AG04449 (cell line): ENCODE measurements at regions of chr3 and their contacts with region 1.

Region 1: DNA sequence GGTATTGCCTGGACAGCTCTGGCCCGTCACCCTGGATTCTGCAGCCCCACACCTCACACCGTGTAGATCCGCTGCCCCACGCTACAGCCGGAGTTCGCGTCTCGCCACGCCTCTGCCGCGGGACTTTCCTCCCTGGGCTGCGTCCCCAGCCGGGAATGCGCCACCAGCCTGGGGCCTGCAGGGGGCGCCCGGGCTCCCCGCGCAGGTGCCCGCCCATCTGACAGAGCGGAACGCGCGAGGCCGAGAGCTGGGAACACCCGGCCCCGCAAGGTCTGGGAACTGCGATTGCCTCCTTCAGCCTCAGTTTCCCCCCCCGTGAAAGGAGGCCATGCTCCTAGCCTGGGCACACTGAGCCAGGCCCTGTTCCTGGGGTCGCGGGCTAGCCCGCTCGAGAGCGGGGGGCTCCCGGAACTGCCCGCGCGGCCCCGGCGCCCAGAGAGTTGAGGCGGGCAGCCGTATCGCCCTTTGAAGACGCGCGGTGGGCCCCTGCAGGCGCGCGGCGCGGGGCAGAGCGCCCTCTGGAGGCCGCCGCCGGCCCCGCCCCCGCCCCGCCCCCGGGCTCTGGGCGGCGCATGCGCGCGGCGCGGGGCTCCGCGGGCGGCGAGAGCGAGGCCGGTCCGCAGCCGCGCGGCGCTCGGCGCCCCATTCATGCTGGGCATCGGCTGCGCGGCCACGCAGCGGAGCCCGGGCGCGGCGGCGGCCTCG is at the start of gene PLXNA1:
- DNase-seq: no peak
- H3K4me3 ChIP-seq: peak within 1 kb of the TSS; percentile 69
- CTCF ChIP-seq: peak; percentile 99

Region 2: DNA sequence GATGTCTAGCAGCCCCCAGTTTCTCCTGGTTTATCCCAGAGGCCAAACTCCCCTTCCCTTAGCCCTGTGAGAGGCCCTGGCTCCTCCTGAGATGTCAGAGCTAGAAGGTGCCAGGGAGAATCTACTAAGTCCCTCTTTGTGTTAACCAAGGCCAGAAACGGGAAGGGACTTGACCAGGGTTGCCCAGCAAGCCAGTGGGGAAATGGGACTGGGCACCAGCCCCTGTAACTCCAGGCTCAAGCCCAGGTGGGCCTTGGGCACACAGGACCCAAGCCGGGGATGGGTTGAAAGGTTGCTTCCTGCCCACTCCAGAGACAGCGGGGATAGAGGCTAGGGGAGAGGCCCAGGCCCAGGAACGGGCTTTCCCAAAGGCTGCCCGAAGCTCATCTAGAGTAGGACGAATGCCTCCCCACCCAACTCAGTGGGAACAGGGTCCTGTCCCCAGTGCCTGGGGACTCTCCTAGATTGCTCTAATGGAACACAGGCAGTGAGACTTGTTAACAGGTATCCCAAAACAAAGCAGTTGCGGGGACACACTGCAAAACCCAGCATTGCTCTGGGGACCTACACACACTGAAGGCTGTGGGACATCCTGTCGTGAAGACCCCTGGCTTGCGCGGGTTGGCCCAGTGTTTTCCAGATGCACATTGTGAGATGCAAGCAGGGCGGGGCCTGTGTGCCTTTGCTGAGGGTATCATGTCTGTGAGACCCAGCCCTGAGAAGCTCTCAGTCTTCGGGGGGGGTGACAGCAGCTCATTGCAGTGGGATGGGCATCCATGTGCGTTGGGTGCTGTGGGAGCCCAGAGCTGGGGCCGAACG is 314.8 kb before region 1 on chr3:
- CTCF ChIA-PET with region 1: no interaction called
- POLR2A ChIA-PET with region 1: no interaction called
- DNase-seq: no peak
- H3K4me3 ChIP-seq: no peak overlapping the region
- CTCF ChIP-seq: no peak

Region 3: DNA sequence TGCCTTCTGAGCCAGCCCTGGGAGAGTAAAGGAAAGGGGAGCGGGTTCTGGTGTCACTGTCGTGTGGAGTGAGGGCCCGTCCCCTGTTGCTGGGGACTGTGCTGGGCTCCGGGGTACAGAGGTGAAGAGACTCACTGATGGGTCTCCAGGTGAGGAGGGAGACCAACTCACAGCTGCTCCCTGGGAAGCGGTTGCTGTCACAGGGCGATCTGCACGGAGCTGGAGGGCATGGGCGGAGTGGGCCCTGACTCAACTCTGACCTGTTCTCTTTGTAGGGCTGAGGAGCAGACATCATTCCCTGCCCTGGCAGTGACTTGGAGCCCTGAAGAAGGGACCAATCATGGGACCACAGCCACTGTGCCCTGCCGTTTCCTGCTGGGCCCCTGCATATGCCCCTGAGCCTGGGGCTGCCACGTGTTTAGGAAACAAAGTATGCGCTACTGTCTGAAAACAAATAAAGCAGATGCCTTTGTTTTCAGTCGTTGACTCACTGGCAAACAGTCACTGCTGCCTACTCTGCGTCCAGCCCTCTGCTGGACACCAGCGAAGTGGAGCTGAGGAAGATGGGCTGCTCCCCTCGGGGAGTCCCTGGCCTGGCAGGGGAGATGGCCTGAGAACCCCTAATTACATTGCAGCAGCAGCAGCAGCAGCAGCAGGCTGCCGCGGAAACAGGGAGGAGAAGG is 22.6 kb before region 1 on chr3:
- CTCF ChIA-PET with region 1: interaction called, 116 read pairs
- POLR2A ChIA-PET with region 1: no interaction called
- DNase-seq: no peak
- H3K4me3 ChIP-seq: no peak overlapping the region
- CTCF ChIP-seq: peak; percentile 59

Region 4: DNA sequence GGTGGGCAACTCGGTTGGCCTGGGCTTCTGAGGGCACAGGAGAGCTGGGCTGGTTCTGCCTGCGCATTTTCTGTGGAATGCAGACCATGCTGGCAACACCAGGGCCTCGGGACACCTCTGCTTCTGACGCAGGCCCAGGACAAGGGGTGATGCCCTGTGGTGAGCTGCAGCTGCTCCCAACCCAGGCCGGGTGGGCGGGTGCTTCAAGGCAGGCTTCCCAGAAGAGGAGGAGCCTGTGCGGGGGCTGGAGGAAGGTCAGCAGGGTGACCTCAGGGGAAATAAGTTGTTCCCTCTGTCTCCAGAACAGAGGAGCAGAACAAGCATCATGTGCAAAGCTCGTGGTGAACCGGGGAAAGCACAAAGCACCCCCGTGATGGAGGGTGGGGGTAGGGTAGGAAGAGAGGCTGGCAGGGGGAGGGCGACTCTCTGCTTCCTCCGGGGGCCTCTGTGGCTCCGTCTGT is 10.7 kb before region 1 on chr3:
- CTCF ChIA-PET with region 1: interaction called, 116 read pairs
- POLR2A ChIA-PET with region 1: no interaction called
- DNase-seq: no peak
- H3K4me3 ChIP-seq: no peak overlapping the region
- CTCF ChIP-seq: no peak

Region 5: GRCh38 chr3:126995926-126996512 is 13.4 kb after region 1 on chr3:
- CTCF ChIA-PET with region 1: interaction called, 18 read pairs
- POLR2A ChIA-PET with region 1: interaction called, 3 read pairs
- DNase-seq: no peak
- H3K4me3 ChIP-seq: no peak overlapping the region
- CTCF ChIP-seq: peak; percentile 7